ENCODE measurements at regions of chr22 and their contacts with region 1.

Region 1: GRCh38 chr22:50399751-50400331 is 56.7 kb downstream of the PPP6R2 start:
- DNase-seq: peak; percentile 44
- ATAC-seq: peak; percentile 65
- H3K4me3 ChIP-seq: no peak overlapping the region
- H3K4me3 Mint-ChIP-seq: peak overlapping the region; percentile 66
- H3K27ac ChIP-seq: peak overlapping the region; percentile 45 to 47
- H3K27ac Mint-ChIP-seq: peak overlapping the region; percentile 88
- H3K4me1 ChIP-seq: peaks cover 30 to 44% of the 10 kb centered on the region in 2 donors
- H3K4me1 Mint-ChIP-seq: peaks cover 44% of the 10 kb centered on the region
- H3K27me3 ChIP-seq: no peaks in the 10 kb centered on the region
- H3K27me3 Mint-ChIP-seq: no peaks in the 10 kb centered on the region
- CTCF ChIP-seq: no peak

Region 2: DNA sequence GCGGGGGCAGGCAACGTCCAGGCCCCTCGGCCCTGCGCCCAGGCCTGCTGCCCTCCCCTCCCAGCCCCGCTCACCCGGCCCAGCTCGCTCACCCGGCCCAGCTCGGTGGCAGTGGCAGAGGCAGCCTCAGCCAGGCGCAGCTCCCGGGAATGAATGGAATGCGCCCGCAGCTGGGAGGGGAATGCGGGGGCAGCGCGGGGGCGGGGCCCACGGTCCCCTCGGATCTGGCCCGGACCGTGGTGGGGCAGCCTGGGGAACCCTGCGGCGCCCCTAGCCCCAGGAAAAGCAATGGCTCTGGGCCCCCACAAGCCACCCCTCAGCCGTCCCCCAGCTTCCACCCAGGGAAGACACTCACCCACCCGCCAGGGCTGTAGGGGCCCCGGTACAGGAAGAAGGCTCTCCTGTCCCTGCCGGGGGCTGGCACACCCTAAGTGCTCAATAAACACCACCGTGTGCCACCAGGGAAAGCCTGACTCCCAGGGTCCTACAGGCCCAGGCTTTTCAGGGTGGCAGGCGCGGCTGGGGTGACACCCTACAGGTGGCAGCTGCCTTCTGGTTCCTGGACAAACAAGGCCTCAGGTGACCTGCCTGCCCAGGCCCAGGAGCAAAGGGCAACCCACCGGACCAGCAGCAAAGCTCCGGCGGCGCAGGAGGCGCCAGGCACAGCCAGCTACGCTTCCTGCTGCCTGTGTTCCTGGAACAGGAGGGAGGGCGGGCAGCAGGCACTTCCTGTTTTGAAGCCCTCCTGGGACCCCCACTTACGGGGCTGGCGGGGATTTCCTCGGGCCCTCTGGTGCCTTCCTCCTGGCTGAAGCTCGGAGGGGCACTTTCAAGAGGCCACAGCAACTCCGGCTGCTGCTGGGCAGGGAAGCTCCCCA is 106.2 kb before region 1 on chr22:
- CTCF ChIA-PET with region 1: no interaction called
- POLR2A ChIA-PET with region 1: interaction called, 11 read pairs
- intact Hi-C with region 1: no loop called
- DNase-seq: peak; percentile 73
- ATAC-seq: peak; percentile 58
- H3K4me3 ChIP-seq: peak overlapping the region in 1 of 5 experiments; percentile 33
- H3K4me3 Mint-ChIP-seq: peak overlapping the region; percentile 64
- H3K27ac ChIP-seq: no peak overlapping the region
- H3K27ac Mint-ChIP-seq: peak overlapping the region; percentile 46
- H3K4me1 ChIP-seq: peaks cover 37 to 44% of the 10 kb centered on the region in 2 donors
- H3K4me1 Mint-ChIP-seq: peaks cover 41% of the 10 kb centered on the region
- H3K27me3 ChIP-seq: peaks cover 0 to 32% (median 12%) of the 10 kb centered on the region in 4 experiments
- H3K27me3 Mint-ChIP-seq: peaks cover 17% of the 10 kb centered on the region
- CTCF ChIP-seq: no peak

Region 3: DNA sequence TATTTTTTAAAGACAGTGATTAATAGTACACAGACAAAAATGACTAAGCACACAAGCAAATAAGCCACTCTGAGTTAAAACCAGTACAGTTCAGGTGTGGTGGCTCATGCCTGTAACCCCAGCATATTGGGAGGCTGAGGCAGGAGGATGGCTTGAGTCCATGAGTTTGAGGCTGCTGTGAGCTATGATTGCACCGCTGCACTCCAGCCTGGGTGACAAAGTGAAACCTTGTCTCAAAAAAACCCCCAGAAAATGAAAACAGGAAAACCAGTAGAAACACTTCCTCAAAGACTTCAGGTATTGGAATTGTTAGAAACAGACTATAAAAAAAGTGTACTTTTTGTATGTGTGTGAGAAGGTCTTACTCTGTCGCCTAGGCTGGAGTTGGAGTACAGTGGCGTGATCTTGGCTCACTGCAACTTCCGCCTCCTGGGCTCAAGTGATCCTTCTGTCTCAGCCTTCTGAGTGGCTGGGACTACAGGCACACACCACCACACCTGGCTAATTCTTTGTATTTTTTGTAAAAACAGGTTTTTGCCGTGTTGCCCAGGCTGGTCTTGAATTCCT is 23.7 kb before region 1 on chr22:
- CTCF ChIA-PET with region 1: no interaction called
- POLR2A ChIA-PET with region 1: no interaction called
- intact Hi-C with region 1: no loop called
- DNase-seq: peak; percentile 56
- ATAC-seq: peak; percentile 36
- H3K4me3 ChIP-seq: peak overlapping the region in 2 of 5 experiments; percentile 8 to 11
- H3K4me3 Mint-ChIP-seq: peak overlapping the region; percentile 65
- H3K27ac ChIP-seq: peak overlapping the region; percentile 27 to 60
- H3K27ac Mint-ChIP-seq: peak overlapping the region; percentile 85
- H3K4me1 ChIP-seq: peaks cover 16 to 21% of the 10 kb centered on the region in 2 donors
- H3K4me1 Mint-ChIP-seq: peaks cover 19% of the 10 kb centered on the region
- H3K27me3 ChIP-seq: no peaks in the 10 kb centered on the region
- H3K27me3 Mint-ChIP-seq: no peaks in the 10 kb centered on the region
- CTCF ChIP-seq: no peak

Region 4: DNA sequence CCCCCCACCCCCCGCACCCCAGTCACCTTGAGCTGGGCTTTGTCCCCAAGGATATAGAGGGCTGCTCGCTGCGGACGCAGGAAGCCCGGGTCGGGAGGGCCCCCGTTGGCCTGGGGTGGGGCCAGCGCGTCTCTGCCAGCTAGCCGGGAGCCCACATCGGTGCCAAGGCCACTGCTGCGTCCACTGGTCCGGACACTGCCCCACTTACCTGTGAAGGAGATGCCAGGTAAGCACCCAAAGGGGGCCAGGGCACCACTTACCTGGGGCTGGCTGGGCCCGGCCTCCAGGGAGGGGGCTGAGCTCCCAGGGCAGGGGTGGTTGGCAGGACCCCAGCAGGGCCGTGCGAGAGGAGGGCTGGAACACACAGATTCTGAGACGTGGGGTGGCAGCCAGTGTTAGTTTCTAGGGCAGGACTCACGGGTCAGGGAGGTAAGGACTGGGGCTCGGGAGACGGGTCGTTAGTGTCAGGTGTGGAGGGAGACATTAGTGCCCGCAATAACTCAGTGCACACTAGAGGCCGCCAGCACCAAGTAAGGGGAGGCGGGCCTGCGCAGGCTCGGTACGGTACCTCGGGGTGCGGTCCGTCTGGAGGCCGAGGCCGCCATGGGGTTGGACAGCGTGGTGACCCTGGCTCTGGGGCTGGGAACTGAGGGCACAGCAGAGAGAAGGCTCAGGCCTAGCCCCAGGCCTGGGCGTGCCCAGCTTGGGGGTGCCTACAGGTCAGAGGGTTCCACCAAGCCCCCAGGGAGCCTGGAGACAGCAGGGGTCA is 56.8 kb after region 1 on chr22:
- CTCF ChIA-PET with region 1: no interaction called
- POLR2A ChIA-PET with region 1: interaction called, 13 read pairs
- intact Hi-C with region 1: no loop called
- DNase-seq: no peak
- ATAC-seq: no peak
- H3K4me3 ChIP-seq: no peak overlapping the region
- H3K4me3 Mint-ChIP-seq: no peak overlapping the region
- H3K27ac ChIP-seq: no peak overlapping the region
- H3K27ac Mint-ChIP-seq: peak overlapping the region; percentile 59
- H3K4me1 ChIP-seq: no peaks in the 10 kb centered on the region
- H3K4me1 Mint-ChIP-seq: no peaks in the 10 kb centered on the region
- H3K27me3 ChIP-seq: no peaks in the 10 kb centered on the region
- H3K27me3 Mint-ChIP-seq: no peaks in the 10 kb centered on the region
- CTCF ChIP-seq: peak; percentile 35

Region 5: DNA sequence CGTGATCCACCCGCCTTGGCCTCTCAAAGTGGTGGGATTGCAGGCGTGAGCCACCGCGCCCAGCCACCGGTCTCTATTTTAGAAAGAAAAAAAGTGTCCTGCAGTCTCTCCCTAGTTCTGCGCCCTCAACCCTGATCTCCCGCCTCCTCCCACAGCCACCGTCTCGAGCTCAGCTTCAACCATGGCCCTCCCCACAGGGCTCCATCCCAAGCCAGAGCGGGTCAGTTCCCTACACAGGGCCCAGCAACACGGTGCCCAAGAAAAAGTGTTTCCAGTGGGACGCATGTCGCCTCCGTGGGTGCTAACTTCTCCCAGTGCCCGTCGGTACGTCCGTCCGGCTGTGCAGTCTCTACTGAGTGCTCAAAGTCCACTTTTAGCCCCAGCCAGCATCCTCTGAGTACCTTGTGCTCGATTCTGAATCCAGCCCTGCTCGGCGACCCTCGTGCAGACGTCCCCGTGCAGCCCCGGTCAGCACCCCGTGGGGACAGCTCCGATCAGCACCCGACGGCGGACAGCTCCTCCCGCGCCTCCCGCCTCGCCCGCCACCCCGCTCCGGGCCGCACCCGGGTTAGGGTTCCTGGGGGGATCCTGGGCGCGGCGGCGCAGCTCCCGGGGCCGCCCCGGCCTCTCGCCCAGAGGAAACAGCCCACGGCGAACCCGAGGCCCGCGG is 200.1 kb after region 1 on chr22:
- CTCF ChIA-PET with region 1: no interaction called
- POLR2A ChIA-PET with region 1: no interaction called
- intact Hi-C with region 1: no loop called
- DNase-seq: peak; percentile 75
- ATAC-seq: peak; percentile 89
- H3K4me3 ChIP-seq: no peak overlapping the region
- H3K4me3 Mint-ChIP-seq: peak overlapping the region; percentile 77
- H3K27ac ChIP-seq: no peak overlapping the region
- H3K27ac Mint-ChIP-seq: no peak overlapping the region
- H3K4me1 ChIP-seq: peaks cover 7 to 9% of the 10 kb centered on the region in 2 donors
- H3K4me1 Mint-ChIP-seq: peaks cover 12% of the 10 kb centered on the region
- H3K27me3 ChIP-seq: peaks cover 0 to 54% (median 26%) of the 10 kb centered on the region in 4 experiments
- H3K27me3 Mint-ChIP-seq: peaks cover 28% of the 10 kb centered on the region
- CTCF ChIP-seq: no peak

Measured in B cell (primary cell).